Activated T-helper 1 cell treated with anti-CD3 and anti-CD28 coated beads, Interleukin-12 subunit alpha, Interleukin-12 subunit beta, Interleukin-2, Interleukin-4 antibody, amounts not matched to agents 30 ng/mL and 10 ng/mL and 1 ng/mL, durations not matched to agents 14 hours and 24 hours and 36 hours (primary cell): ENCODE measurements at regions of chr3 and their contacts with region 1.

Region 1: DNA sequence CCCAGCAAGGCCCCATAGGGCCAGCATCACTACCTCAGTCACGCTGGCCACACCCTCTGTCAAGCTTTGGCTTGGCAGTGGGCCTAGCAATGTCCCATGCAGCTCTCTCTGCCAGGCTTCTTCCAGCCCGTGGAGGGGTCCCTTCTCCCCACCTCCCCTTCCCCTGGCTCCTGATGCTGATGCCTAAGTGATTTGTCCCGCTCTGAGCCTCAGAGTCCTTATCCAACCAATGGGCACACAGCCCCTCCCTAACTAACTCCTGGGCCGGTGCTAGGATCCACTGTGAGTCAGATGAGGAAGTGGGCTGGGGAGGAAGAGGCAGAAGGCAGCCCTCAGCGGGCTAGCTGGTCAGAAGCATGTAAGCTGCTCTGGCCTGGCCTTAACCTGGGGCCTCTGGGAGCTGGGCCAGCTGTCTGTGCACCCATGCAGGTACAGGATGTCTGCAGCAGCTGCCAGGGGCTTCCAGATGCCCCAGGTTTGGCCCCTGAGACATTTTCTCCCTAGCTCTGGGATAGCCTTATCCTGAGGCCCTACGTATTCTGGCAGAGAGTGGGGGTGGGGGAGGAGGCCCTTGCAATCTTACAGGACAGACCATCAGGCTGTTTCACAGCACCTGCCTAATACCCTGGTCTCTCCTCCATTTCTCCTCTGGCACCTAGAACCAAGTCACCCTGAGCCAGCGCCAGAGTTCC is 740 bp upstream of the ZBTB47 start:
- DNase-seq: no peak
- H3K4me3 Mint-ChIP-seq: peak overlapping the region; percentile 85
- H3K27ac Mint-ChIP-seq: peak overlapping the region; percentile 63
- H3K4me1 Mint-ChIP-seq: peaks cover 23% of the 10 kb centered on the region
- H3K27me3 Mint-ChIP-seq: peaks cover 5% of the 10 kb centered on the region

Region 2: GRCh38 chr3:42711491-42712343 is 59.0 kb after region 1 on chr3:
- intact Hi-C with region 1: no loop called
- DNase-seq: no peak
- H3K4me3 Mint-ChIP-seq: no peak overlapping the region
- H3K27ac Mint-ChIP-seq: no peak overlapping the region
- H3K4me1 Mint-ChIP-seq: no peaks in the 10 kb centered on the region
- H3K27me3 Mint-ChIP-seq: peaks cover 8% of the 10 kb centered on the region

Region 3: DNA sequence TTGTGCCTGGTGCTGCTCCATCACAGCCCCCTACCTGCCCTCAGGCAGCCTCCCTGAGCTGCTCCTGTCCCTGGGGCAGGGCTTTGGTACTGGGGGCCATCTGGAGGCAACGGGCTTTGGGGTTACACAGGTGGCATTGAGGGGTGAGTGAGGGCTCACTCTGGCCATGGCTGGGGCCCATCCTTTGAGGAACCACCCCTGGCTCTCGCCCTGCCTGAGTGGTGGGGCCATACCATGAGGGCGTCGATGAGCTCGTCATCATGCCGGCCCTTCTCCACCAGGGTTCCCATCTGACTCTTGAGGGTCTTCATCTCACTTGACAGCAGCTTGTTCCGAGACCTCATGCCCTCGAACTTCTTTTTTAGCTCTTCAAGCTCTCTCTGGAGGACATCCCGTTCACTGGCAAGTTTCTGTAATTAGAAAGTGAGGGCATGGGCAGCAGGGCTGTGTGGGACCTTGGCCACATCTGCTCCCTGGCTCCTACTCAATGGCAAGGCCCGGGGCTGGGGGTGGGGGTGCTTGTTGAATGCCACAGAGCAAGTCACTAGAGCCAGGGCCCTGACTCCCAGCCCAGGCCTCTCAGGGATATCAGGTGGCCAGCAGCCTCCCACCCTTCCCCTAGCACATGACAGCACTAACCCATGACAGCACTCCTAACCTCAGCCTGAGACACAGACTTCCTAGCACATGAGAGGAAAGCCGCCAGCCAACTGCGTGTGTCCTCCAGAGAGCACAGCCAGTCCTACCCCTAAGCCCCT is 86.8 kb after region 1 on chr3:
- intact Hi-C with region 1: loop called (anchors 5 kb)
- DNase-seq: no peak
- H3K4me3 Mint-ChIP-seq: no peak overlapping the region
- H3K27ac Mint-ChIP-seq: no peak overlapping the region
- H3K4me1 Mint-ChIP-seq: peaks cover 6% of the 10 kb centered on the region
- H3K27me3 Mint-ChIP-seq: peaks cover 2% of the 10 kb centered on the region